CD4-positive, alpha-beta T cell (primary cell): ENCODE measurements at regions of chr19 and their contacts with region 1.

Region 1: DNA sequence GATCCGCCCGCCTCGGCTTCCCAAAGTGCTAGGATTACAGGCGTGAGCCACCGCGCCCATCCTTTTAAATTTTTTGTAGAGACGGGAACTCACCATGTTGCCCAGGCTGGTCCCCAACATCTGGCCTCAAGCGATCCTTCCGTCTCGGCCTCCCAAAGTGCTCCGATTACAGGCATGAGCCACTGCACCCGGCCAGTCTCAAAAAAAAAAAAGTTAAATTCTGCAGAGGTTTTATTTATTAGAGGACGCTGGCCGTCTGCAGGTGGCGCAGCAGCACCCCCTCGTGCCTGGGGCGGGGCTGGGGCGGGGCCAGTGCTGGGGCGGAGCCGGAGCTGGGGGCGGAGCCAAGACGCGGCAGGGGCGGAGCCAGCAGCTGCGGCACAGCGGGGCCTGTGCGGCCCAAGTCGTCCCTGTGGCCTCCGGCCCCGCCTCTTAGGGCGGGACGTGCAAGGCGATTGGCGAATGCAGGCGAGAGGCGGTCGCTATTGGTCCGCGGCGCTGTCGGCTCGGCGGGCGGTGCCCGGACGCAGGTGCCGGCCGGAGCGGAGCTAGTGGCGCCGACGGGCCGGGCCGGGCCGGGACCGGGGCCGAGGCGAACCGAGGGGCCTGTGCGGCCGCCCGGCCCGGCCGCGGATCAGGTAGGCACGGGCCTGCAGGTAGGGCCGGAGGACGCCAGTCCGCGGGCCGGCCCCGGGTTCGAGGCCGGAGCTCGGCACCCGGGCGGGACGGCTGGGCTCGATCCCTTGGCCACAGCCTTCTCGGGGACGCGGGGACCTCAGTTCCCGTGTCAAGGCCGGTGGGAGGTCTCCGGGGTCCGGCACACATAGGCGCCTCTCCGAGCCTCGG is at the start of gene MARCHF2:
- DNase-seq: peak; percentile 91 to 99 (median 96)
- ATAC-seq: peak; percentile 99
- H3K4me3 ChIP-seq: peak within 1 kb of the TSS; percentile 62
- H3K4me3 Mint-ChIP-seq: peak within 1 kb of the TSS; percentile 81
- H3K27ac ChIP-seq: no peak within 1 kb of the TSS
- H3K27ac Mint-ChIP-seq: no peak within 1 kb of the TSS
- H3K4me1 ChIP-seq: peaks cover 15% of the 10 kb centered on the region
- H3K4me1 Mint-ChIP-seq: peaks cover 13% of the 10 kb centered on the region
- H3K27me3 ChIP-seq: no peaks in the 10 kb centered on the region
- H3K27me3 Mint-ChIP-seq: no peaks in the 10 kb centered on the region
- CTCF ChIP-seq: peak; percentile 75
- total RNA-seq, gene MARCHF2: 20.0 to 22.2 TPM

Region 2: GRCh38 chr19:8158411-8159074 is 254.5 kb before region 1 on chr19:
- CTCF ChIA-PET with region 1: no interaction called
- POLR2A ChIA-PET with region 1: no interaction called
- intact Hi-C with region 1: no loop called
- DNase-seq: peak in 11 of 14 experiments; percentile 9 to 85 (median 36)
- ATAC-seq: peak; percentile 57
- H3K4me3 ChIP-seq: no peak overlapping the region
- H3K4me3 Mint-ChIP-seq: no peak overlapping the region
- H3K27ac ChIP-seq: no peak overlapping the region
- H3K27ac Mint-ChIP-seq: no peak overlapping the region
- H3K4me1 ChIP-seq: no peaks in the 10 kb centered on the region
- H3K4me1 Mint-ChIP-seq: no peaks in the 10 kb centered on the region
- H3K27me3 ChIP-seq: peaks cover 9 to 10% of the 10 kb centered on the region in 2 experiments
- H3K27me3 Mint-ChIP-seq: peaks cover 24% of the 10 kb centered on the region
- CTCF ChIP-seq: peak; percentile 75

Region 3: DNA sequence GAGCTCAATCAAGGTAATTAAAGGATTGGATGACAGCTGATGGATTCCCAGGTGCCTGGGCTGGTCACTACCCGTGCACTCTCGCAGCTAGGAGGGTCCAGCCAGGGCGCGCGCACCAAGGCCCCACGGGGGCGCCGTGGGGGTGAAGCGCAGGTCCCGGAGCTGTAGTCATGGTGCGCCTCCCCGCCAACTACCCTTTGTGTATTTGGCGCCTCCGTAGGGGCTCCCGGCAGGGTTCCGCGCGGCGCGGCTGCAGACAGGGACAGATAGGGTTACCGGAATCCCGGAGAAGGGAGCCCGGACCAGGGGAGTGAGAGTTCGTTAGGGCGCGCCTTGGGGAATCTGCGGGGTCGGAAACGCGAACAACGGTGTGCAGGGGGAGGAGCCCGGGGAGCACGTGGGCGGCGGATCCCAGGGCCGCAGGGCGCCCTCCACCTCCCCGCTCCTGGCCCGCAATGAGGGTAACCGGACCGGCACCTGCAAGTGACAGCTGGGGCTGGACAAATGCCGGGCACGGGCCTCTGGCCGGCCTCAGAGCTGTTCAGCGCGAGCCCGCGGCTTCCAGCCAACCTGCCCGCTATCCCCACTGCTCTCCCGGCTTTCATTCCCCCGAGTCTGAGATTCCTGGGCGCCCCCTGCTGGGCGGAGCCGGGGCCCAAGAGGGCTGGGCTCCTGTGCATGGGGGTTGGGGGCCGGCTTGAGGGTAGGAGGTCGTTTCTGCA is 92.8 kb after region 1 on chr19:
- CTCF ChIA-PET with region 1: interaction called, 10 read pairs
- POLR2A ChIA-PET with region 1: interaction called, 6 read pairs
- intact Hi-C with region 1: loop called in 1 of 2 experiments (anchors 1 kb)
- DNase-seq: peak; percentile 47 to 86 (median 67)
- ATAC-seq: peak; percentile 77
- H3K4me3 ChIP-seq: peak overlapping the region; percentile 75
- H3K4me3 Mint-ChIP-seq: peak overlapping the region; percentile 93
- H3K27ac ChIP-seq: peak overlapping the region; percentile 5 to 46
- H3K27ac Mint-ChIP-seq: peak overlapping the region; percentile 85
- H3K4me1 ChIP-seq: peaks cover 40% of the 10 kb centered on the region
- H3K4me1 Mint-ChIP-seq: peaks cover 22% of the 10 kb centered on the region
- H3K27me3 ChIP-seq: no peaks in the 10 kb centered on the region
- H3K27me3 Mint-ChIP-seq: no peaks in the 10 kb centered on the region
- CTCF ChIP-seq: peak; percentile 73

Region 4: DNA sequence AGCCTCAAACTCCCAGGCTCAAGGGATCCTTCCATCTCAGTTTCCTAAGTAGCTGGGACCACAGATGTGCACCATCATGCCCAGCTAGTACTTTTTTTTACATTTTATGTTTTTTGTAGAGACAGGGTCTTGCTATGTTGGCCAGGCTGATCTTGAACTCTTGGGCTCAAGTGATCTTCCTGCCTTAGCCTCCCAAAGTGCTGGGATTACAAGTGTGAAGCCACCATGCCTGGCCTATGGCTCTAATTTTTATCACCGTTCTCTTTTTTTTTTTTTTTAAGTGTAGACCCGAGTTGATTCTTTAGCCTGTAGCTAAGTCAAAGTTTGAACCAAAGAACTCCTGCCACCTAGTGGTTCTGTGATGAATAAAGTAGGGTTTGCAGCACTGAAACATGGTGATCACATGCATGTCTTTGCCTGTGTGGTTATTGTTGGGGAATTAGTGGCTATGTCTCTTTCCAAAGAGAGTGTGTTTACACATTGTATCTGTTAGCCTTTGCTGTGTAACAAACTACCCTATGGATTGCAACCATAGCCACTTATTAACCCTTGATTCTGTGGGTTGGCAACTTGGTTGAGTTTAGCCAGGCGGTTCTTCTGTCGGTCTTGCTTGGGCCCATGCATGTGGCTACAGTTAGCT is 229.0 kb after region 1 on chr19:
- CTCF ChIA-PET with region 1: no interaction called
- POLR2A ChIA-PET with region 1: no interaction called
- intact Hi-C with region 1: loop called (anchors 5 kb)
- DNase-seq: peak in 4 of 14 experiments; percentile 34 to 72 (median 65)
- ATAC-seq: peak; percentile 68
- H3K4me3 ChIP-seq: no peak overlapping the region
- H3K4me3 Mint-ChIP-seq: no peak overlapping the region
- H3K27ac ChIP-seq: no peak overlapping the region
- H3K27ac Mint-ChIP-seq: no peak overlapping the region
- H3K4me1 ChIP-seq: peaks cover 11% of the 10 kb centered on the region
- H3K4me1 Mint-ChIP-seq: no peaks in the 10 kb centered on the region
- H3K27me3 ChIP-seq: peaks cover 4 to 7% of the 10 kb centered on the region in 2 experiments
- H3K27me3 Mint-ChIP-seq: peaks cover 39% of the 10 kb centered on the region
- CTCF ChIP-seq: peak; percentile 69